PC-9 (cell line): ENCODE measurements at regions of chr1 and their contacts with region 1.

Region 1: DNA sequence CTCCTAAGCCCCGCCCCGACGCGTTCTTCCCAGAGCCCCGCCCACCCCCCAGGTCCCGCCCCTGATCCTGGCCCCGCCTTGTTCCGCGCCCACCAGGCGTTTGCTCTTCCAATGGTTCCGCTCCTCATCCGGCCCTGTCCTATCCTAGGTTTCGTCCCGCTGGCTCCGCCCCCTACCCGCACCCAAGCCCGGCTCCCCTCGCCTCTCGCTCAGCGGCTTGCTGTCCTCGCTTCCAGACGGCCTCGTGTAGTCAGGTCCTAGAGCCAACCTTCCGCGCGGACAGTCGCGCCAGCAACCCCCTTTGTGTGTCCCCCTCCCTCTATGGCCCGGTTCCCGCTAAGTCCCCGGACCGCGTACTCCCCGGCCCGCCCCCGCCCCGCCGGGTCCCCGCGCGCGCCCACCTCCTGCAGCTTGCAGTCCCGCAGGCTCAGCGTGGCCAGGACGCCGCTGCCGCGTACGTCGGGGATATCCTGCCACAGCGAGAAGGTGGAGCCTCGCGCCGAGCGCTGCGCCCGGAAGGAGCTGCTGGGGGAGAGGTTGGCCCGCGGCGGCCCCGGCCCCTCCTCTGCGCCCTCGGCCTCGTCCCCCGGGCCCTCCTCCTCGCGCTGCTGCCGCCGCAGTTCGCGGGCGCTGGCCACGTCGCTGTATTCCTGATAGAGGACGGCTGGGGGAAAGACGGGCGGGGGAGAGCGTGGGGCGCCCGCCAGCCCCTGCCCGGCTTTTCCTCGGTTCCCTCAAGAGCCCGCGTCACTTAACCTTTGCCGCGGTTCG is 5.7 kb downstream of the ARHGEF19 start:
- DNase-seq: peak; percentile 89 to 97
- H3K4me3 ChIP-seq: peak overlapping the region; percentile 67
- H3K27ac ChIP-seq: peak overlapping the region; percentile 83
- H3K4me1 ChIP-seq: peaks cover 16% of the 10 kb centered on the region
- H3K27me3 ChIP-seq: no peaks in the 10 kb centered on the region
- CTCF ChIP-seq: no peak

Region 2: DNA sequence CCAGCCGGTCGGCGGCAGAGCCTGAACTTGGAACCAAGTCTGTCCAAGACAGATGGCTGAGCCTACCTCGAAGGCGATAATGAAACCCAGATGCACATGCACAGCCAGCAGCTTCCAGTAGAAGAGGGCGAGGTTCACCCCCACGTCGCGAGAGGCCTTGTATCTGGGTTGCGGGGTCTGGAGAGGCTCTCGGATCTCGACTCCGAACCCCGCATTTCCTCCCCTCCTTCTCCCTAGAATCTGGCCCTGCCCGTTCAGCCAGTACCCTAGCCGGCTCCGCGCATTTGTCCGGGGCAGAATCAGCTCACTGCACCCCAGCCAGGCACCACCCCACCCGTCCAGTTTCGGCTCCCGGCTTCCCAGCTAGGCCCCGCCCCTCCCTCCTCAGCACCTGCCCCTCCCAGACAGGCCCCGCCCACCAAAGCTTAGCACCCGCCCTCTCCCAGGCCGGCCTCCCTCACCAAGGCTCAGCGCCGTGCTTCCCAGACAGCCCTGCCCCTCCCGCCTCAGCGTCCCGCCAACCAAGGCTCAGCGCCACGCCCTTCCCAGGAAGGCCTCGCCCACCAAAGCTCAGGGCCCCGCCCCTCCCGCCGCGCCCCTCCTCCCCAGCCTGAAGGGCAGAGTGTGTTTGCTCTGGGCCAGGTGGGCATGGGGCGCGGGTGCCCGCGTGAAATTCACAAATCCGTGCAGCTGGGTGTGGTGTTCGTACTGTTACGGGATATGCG is 10.5 kb after region 1 on chr1:
- CTCF ChIA-PET with region 1: no interaction called
- POLR2A ChIA-PET with region 1: interaction called, 22 read pairs
- intact Hi-C with region 1: loop called (anchors 1 kb)
- DNase-seq: peak; percentile 83 to 98
- H3K4me3 ChIP-seq: peak overlapping the region; percentile 51; the same call in 1 of the 2 replicates
- H3K27ac ChIP-seq: no peak overlapping the region
- H3K4me1 ChIP-seq: peaks cover 17% of the 10 kb centered on the region
- H3K27me3 ChIP-seq: no peaks in the 10 kb centered on the region
- CTCF ChIP-seq: no peak